ENCODE measurements at regions of chr5 and their contacts with region 1.

Region 1: DNA sequence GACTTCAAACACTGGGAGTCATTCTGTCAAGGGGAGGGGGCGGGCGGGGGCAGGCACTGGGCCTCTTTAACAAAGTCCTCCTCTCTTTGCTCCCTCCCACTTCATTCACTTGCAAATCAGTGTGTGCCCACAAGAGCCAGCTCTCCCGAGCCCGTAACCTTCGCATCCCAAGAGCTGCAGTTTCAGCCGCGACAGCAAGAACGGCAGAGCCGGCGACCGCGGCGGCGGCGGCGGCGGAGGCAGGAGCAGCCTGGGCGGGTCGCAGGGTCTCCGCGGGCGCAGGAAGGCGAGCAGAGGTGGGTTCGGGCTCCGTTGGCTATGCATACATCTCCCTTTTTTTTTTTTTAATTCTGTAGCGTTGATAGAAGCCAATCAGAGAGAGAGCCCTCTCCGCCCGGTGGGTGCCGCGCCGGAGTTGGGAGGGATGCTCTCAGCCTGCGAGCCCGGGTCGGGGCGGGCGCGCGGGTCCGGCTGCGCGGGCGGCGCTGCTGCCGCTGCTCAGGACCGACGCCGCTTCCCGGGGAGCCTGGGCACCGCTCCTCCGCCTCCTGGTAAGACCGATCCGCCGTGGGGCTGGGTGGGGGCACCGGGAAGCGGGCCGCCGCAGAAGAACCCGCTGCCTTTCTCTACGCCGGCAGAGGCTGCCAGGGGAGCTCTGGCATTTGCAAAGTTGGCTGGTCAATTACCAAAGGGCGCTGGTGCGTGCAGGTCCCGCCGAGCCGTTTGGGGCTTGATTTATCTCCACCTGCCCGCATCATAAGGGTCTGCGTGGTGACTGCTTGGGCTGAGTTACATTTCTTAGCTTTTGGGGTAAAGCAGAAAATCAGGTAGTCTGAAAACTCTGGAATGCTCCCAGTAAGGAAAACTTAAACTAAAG is at the start of gene CDH6:
- DNase-seq: peak; percentile 75
- ATAC-seq: peak; percentile 67
- H3K4me3 ChIP-seq: peak within 1 kb of the TSS; percentile 88
- H3K27ac ChIP-seq: peak within 1 kb of the TSS; percentile 67
- H3K4me1 ChIP-seq: peaks cover 5% of the 10 kb centered on the region
- H3K27me3 ChIP-seq: no peaks in the 10 kb centered on the region
- CTCF ChIP-seq: no peak
- POLR2A ChIP-seq: peak; percentile 76
- RAD21 ChIP-seq: no peak
- total RNA-seq, gene CDH6: 211 and 232 TPM in 2 replicates

Region 2: GRCh38 chr5:30401479-30402058 is 792.3 kb before region 1 on chr5:
- CTCF ChIA-PET with region 1: interaction called, 3 read pairs
- POLR2A ChIA-PET with region 1: no interaction called
- dilution Hi-C with region 1: no loop called
- in situ Hi-C with region 1: no loop called
- intact Hi-C with region 1: loop called (anchors 10 kb)
- DNase-seq: peak; percentile 48
- ATAC-seq: peak; percentile 77
- H3K4me3 ChIP-seq: no peak overlapping the region
- H3K27ac ChIP-seq: no peak overlapping the region
- H3K4me1 ChIP-seq: no peaks in the 10 kb centered on the region
- H3K27me3 ChIP-seq: no peaks in the 10 kb centered on the region
- CTCF ChIP-seq: peak; percentile 63
- POLR2A ChIP-seq: no peak
- RAD21 ChIP-seq: peak; percentile 68

Region 3: GRCh38 chr5:30866142-30866541 is 327.7 kb before region 1 on chr5:
- CTCF ChIA-PET with region 1: no interaction called
- POLR2A ChIA-PET with region 1: no interaction called
- dilution Hi-C with region 1: no loop called
- in situ Hi-C with region 1: no loop called
- intact Hi-C with region 1: loop called (anchors 5 kb)
- DNase-seq: peak; percentile 26
- ATAC-seq: no peak
- H3K4me3 ChIP-seq: no peak overlapping the region
- H3K27ac ChIP-seq: no peak overlapping the region
- H3K4me1 ChIP-seq: peaks cover 3% of the 10 kb centered on the region; the same call in 1 of the 2 replicates
- H3K27me3 ChIP-seq: no peaks in the 10 kb centered on the region
- CTCF ChIP-seq: no peak
- POLR2A ChIP-seq: no peak
- RAD21 ChIP-seq: no peak

Region 4: GRCh38 chr5:31023105-31023504 is 170.7 kb before region 1 on chr5:
- CTCF ChIA-PET with region 1: no interaction called
- POLR2A ChIA-PET with region 1: no interaction called
- dilution Hi-C with region 1: no loop called
- in situ Hi-C with region 1: no loop called
- intact Hi-C with region 1: loop called (anchors 1 kb)
- DNase-seq: peak; percentile 90
- ATAC-seq: peak; percentile 67
- H3K4me3 ChIP-seq: no peak overlapping the region
- H3K27ac ChIP-seq: no peak overlapping the region
- H3K4me1 ChIP-seq: peaks cover 2% of the 10 kb centered on the region; the same call in 1 of the 2 replicates
- H3K27me3 ChIP-seq: no peaks in the 10 kb centered on the region
- CTCF ChIP-seq: no peak
- POLR2A ChIP-seq: no peak
- RAD21 ChIP-seq: no peak

Region 5: GRCh38 chr5:31232273-31232888 is 38.6 kb after region 1 on chr5:
- CTCF ChIA-PET with region 1: no interaction called
- POLR2A ChIA-PET with region 1: no interaction called
- dilution Hi-C with region 1: no loop called
- in situ Hi-C with region 1: no loop called
- intact Hi-C with region 1: loop called (anchors 1 kb)
- DNase-seq: peak; percentile 74
- ATAC-seq: peak; percentile 90
- H3K4me3 ChIP-seq: no peak overlapping the region
- H3K27ac ChIP-seq: no peak overlapping the region
- H3K4me1 ChIP-seq: peaks cover 4% of the 10 kb centered on the region; the same call in 1 of the 2 replicates
- H3K27me3 ChIP-seq: no peaks in the 10 kb centered on the region
- CTCF ChIP-seq: peak; percentile 92
- POLR2A ChIP-seq: no peak
- RAD21 ChIP-seq: peak; percentile 95

Region 6: DNA sequence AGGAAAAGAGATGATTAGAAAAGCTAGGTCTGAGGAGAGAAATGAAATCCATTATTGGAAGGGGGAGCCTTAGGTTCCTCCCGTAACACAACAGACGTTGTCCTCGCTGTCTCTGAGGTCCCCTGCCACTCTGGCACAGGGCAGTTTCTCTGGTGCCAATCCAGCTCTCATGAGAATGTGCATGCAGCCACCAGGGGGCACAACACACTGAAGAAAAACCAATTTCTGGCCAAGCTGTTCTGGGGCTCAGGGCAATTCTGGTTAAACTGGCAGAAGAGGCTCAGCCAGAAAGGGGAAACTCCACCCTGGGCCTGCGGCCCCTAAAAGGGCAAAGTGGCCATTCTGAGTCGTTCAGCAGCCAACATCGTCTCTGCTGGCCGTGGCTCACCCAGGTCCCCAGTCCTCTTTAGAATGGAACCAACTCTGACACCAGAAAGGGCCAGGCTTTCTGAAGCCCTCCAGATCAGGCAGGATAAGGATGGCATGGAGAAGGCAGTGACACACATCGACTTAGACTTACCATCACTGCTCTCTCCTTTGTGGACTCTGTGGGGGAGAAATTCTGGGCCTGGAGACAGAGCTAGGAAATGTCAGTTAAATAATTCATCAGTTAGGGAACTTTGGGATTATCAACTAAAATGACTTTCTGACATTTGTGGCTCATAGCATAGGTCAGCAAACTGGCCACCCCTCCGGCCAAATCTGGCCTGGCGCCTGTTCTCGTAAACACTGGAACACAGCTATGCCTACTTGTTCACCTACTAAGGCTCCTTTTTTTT is 1038.8 kb after region 1 on chr5:
- CTCF ChIA-PET with region 1: no interaction called
- POLR2A ChIA-PET with region 1: no interaction called
- dilution Hi-C with region 1: no loop called
- in situ Hi-C with region 1: no loop called
- intact Hi-C with region 1: no loop called
- DNase-seq: peak; percentile 63
- ATAC-seq: peak; percentile 88
- H3K4me3 ChIP-seq: no peak overlapping the region
- H3K27ac ChIP-seq: no peak overlapping the region
- H3K4me1 ChIP-seq: peaks cover 9% of the 10 kb centered on the region
- H3K27me3 ChIP-seq: no peaks in the 10 kb centered on the region
- CTCF ChIP-seq: peak; percentile 74
- POLR2A ChIP-seq: no peak
- RAD21 ChIP-seq: peak; percentile 77